ENCODE measurements at regions of chr2 and their contacts with region 1.

Region 1: DNA sequence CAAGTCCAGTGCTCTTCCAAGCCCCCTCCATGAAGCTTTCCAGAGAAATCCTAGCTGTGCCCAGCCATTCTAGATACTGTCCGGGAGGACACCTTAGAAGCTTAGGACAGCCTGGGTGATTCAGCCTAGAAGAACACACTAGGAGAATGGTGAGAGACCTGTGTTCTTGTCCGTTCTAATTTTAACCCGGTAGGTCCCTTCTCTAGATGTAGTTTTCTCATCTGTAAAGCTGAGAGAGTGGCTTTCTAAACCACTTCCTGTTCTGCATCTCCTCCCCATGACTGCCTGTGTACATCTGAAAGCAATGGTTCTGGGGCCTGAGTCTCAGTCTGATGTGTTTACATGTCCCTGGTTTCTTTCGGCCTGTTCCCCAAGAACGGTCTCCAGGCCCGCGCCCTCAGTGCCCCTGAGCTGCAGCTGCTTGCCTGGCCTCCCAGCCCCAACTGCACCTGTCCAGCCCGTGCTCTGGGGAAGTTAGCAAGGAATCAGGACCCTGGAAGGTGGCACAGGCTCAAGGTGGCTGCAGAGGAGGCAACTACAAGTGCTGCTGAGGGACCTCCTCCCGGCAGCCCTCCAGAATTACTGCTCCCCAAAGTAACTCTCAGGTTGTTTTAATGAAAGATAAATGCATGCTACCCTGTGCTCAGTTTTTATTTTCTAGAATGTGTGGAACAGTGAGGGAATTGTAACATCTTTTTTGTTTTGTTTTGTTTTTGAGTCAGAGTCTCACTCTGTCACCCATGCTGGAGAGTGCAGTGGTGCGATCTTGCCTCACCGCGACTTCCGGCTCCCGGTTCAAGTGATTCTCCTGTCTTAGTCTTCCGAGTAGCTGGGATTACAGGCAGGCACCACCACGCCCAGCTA is 105.9 kb downstream of the LBH start:
- DNase-seq: peak; percentile 92
- ATAC-seq: peak; percentile 90
- H3K4me3 ChIP-seq: peak overlapping the region; percentile 66
- H3K27ac ChIP-seq: peak overlapping the region; percentile 98
- H3K4me1 ChIP-seq: peaks cover 72% of the 10 kb centered on the region
- H3K27me3 ChIP-seq: no peaks in the 10 kb centered on the region
- CTCF ChIP-seq: no peak
- EP300 ChIP-seq: peak; percentile 31 to 51; a peak in 2 of 4 replicates
- POLR2A ChIP-seq: peak; percentile 56
- RAD21 ChIP-seq: 0 out of 2 replicates have a peak, but pooled peaks have one; percentile 18

Region 2: GRCh38 chr2:30165050-30165520 is 172.1 kb before region 1 on chr2:
- CTCF ChIA-PET with region 1: interaction called, 33 read pairs
- POLR2A ChIA-PET with region 1: interaction called, 3 read pairs
- RAD21 ChIA-PET with region 1: interaction called, 20 read pairs
- SMC1A ChIA-PET with region 1: interaction called, 26 read pairs
- in situ Hi-C with region 1: no loop called
- intact Hi-C with region 1: no loop called
- DNase-seq: peak; percentile 57
- ATAC-seq: peak; percentile 99
- H3K4me3 ChIP-seq: no peak overlapping the region
- H3K27ac ChIP-seq: no peak overlapping the region
- H3K4me1 ChIP-seq: no peaks in the 10 kb centered on the region; the same call in 1 of the 2 replicates
- H3K27me3 ChIP-seq: peaks cover 0 to 2% of the 10 kb centered on the region in 2 experiments; a peak in 1 of 4 replicates
- CTCF ChIP-seq: peak; percentile 71 to 91 (median 89)
- EP300 ChIP-seq: no peak
- POLR2A ChIP-seq: no peak
- RAD21 ChIP-seq: peak; percentile 92

Region 3: GRCh38 chr2:30231212-30231995 is 105.8 kb before region 1 on chr2 and contains the start of gene LBH:
- CTCF ChIA-PET with region 1: interaction called, 104 read pairs
- POLR2A ChIA-PET with region 1: interaction called, 65 read pairs
- RAD21 ChIA-PET with region 1: interaction called, 148 read pairs
- SMC1A ChIA-PET with region 1: interaction called, 282 read pairs
- in situ Hi-C with region 1: no loop called
- intact Hi-C with region 1: loop called (anchors 2 kb)
- DNase-seq: peak; percentile 56
- ATAC-seq: peak; percentile 59
- H3K4me3 ChIP-seq: peak within 1 kb of the TSS; percentile 80
- H3K27ac ChIP-seq: peak within 1 kb of the TSS; percentile 58
- H3K4me1 ChIP-seq: peaks cover 47% of the 10 kb centered on the region
- H3K27me3 ChIP-seq: no peaks in the 10 kb centered on the region
- CTCF ChIP-seq: peak in 1 of 3 experiments; percentile 31; a peak in 1 of 6 replicates
- EP300 ChIP-seq: peak in 1 of 2 experiments; percentile 27; a peak in 1 of 4 replicates
- POLR2A ChIP-seq: peak; percentile 99
- RAD21 ChIP-seq: peak; percentile 24; the same call in 1 of the 2 replicates
- polyA plus RNA-seq, gene LBH: 9.3 to 26.5 TPM

Region 4: DNA sequence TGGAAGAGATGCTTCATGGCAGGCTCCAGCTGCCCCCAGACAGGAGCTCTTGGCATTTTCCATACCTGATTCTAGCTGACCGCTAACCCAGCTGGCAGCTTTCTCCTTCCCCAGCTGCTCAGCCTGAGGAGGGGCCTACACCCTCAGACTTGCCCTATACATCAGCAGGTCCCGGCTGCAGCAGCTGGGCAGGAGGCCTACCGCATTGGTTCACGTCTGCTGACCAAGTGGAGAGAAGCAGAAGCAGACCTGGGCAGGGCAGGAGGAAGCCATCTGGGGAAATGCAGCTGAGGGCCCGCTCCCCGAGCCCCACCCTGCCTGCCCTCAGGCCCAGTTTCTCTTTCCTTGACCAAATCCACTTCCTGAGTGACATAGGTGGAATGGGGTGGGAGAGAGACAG is 55.1 kb before region 1 on chr2:
- CTCF ChIA-PET with region 1: interaction called, 56 read pairs
- POLR2A ChIA-PET with region 1: interaction called, 29 read pairs
- RAD21 ChIA-PET with region 1: interaction called, 108 read pairs
- SMC1A ChIA-PET with region 1: interaction called, 96 read pairs
- in situ Hi-C with region 1: no loop called
- intact Hi-C with region 1: no loop called
- DNase-seq: no peak
- ATAC-seq: peak; percentile 48
- H3K4me3 ChIP-seq: no peak overlapping the region
- H3K27ac ChIP-seq: no peak overlapping the region
- H3K4me1 ChIP-seq: peaks cover 17% of the 10 kb centered on the region
- H3K27me3 ChIP-seq: no peaks in the 10 kb centered on the region
- CTCF ChIP-seq: no peak
- EP300 ChIP-seq: no peak
- POLR2A ChIP-seq: no peak
- RAD21 ChIP-seq: no peak

Region 5: GRCh38 chr2:30321466-30321865 is 15.7 kb before region 1 on chr2:
- CTCF ChIA-PET with region 1: interaction called, 9 read pairs
- POLR2A ChIA-PET with region 1: interaction called, 9 read pairs
- RAD21 ChIA-PET with region 1: interaction called, 22 read pairs
- SMC1A ChIA-PET with region 1: interaction called, 39 read pairs
- in situ Hi-C with region 1: no loop called
- intact Hi-C with region 1: no loop called
- DNase-seq: no peak
- ATAC-seq: no peak
- H3K4me3 ChIP-seq: no peak overlapping the region
- H3K27ac ChIP-seq: no peak overlapping the region
- H3K4me1 ChIP-seq: peaks cover 13% of the 10 kb centered on the region
- H3K27me3 ChIP-seq: no peaks in the 10 kb centered on the region
- CTCF ChIP-seq: no peak
- EP300 ChIP-seq: no peak
- POLR2A ChIP-seq: no peak
- RAD21 ChIP-seq: no peak

Region 6: GRCh38 chr2:30436859-30437435 is 99.7 kb after region 1 on chr2:
- CTCF ChIA-PET with region 1: interaction called, 11 read pairs
- POLR2A ChIA-PET with region 1: interaction called, 4 read pairs
- RAD21 ChIA-PET with region 1: interaction called, 14 read pairs
- SMC1A ChIA-PET with region 1: interaction called, 18 read pairs
- in situ Hi-C with region 1: no loop called
- intact Hi-C with region 1: no loop called
- DNase-seq: no peak
- ATAC-seq: peak; percentile 64
- H3K4me3 ChIP-seq: no peak overlapping the region
- H3K27ac ChIP-seq: no peak overlapping the region
- H3K4me1 ChIP-seq: peaks cover 2% of the 10 kb centered on the region; the same call in 1 of the 2 replicates
- H3K27me3 ChIP-seq: no peaks in the 10 kb centered on the region
- CTCF ChIP-seq: no peak
- EP300 ChIP-seq: no peak
- POLR2A ChIP-seq: no peak
- RAD21 ChIP-seq: no peak

Region 7: DNA sequence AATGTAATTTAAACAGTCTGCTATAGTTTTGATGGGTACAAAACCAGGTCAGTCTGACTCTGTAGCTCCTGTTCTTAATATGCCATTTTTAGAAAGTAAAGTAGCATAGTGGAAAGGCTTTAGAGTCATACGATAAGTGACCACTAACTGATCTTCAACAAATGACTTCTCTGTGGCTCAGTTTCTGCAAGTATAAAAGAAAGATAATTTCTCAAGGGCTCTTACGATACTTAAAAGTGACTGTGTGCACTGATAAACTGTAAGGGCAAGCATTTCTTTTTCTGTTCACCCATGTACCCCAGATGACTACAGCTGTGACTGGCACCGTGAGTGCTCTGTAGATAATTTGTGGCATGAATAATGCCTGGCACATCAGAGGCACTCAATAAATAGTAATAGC is 288.5 kb after region 1 on chr2:
- CTCF ChIA-PET with region 1: no interaction called
- POLR2A ChIA-PET with region 1: no interaction called
- RAD21 ChIA-PET with region 1: interaction called, 18 read pairs
- SMC1A ChIA-PET with region 1: interaction called, 4 read pairs
- in situ Hi-C with region 1: no loop called
- intact Hi-C with region 1: loop called (anchors 5 kb)
- DNase-seq: no peak
- ATAC-seq: peak; percentile 39
- H3K4me3 ChIP-seq: no peak overlapping the region
- H3K27ac ChIP-seq: peak overlapping the region; percentile 87
- H3K4me1 ChIP-seq: peaks cover 25% of the 10 kb centered on the region
- H3K27me3 ChIP-seq: no peaks in the 10 kb centered on the region
- CTCF ChIP-seq: no peak
- EP300 ChIP-seq: no peak
- POLR2A ChIP-seq: no peak
- RAD21 ChIP-seq: no peak